Activated B cell treated with CpG ODN at 0.5 μM for 24 hours (primary cell): ENCODE measurements at regions of chr15 and their contacts with region 1.

Region 1: GRCh38 chr15:78195735-78196201 is 38.6 kb downstream of the ACSBG1 start:
- DNase-seq: peak; percentile 59
- ATAC-seq: peak; percentile 90
- H3K4me3 Mint-ChIP-seq: no peak overlapping the region
- H3K27ac Mint-ChIP-seq: no peak overlapping the region
- H3K4me1 Mint-ChIP-seq: no peaks in the 10 kb centered on the region
- H3K27me3 Mint-ChIP-seq: no peaks in the 10 kb centered on the region
- CTCF ChIP-seq: peak; percentile 23

Region 2: GRCh38 chr15:77773906-77774305 is 421.9 kb before region 1 on chr15:
- CTCF ChIA-PET with region 1: no interaction called
- POLR2A ChIA-PET with region 1: no interaction called
- intact Hi-C with region 1: no loop called
- DNase-seq: no peak
- ATAC-seq: no peak
- H3K4me3 Mint-ChIP-seq: no peak overlapping the region
- H3K27ac Mint-ChIP-seq: no peak overlapping the region
- H3K4me1 Mint-ChIP-seq: no peaks in the 10 kb centered on the region
- H3K27me3 Mint-ChIP-seq: peaks cover 8% of the 10 kb centered on the region
- CTCF ChIP-seq: no peak

Region 3: GRCh38 chr15:77959432-77959879 is 236.3 kb before region 1 on chr15:
- CTCF ChIA-PET with region 1: interaction called, 16 read pairs
- POLR2A ChIA-PET with region 1: no interaction called
- intact Hi-C with region 1: loop called (anchors 1 kb)
- DNase-seq: peak; percentile 69
- ATAC-seq: peak; percentile 99
- H3K4me3 Mint-ChIP-seq: peak overlapping the region; percentile 44
- H3K27ac Mint-ChIP-seq: no peak overlapping the region
- H3K4me1 Mint-ChIP-seq: peaks cover 7% of the 10 kb centered on the region
- H3K27me3 Mint-ChIP-seq: peaks cover 23% of the 10 kb centered on the region
- CTCF ChIP-seq: peak; percentile 93

Region 4: DNA sequence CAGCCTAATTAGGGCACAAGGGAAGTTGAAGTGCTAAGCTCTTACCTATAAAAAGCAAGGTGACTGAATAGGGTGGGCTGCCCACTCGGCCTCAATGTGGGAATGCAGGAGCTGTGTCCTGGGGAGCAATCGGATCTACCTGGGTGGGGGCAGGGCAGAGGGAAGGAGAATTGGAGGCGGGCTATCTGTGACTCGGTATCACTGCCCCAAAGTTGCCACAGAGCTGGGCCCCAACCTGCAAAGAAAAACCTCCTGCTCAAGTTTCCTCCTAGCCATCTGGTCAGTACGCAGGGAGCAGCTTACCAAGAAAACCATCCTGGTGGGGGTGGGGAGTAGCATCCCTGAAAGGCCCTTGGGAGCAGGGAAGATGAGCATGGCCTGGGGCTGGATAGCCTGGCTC is 75.2 kb before region 1 on chr15:
- CTCF ChIA-PET with region 1: interaction called, 191 read pairs
- POLR2A ChIA-PET with region 1: no interaction called
- intact Hi-C with region 1: no loop called
- DNase-seq: no peak
- ATAC-seq: no peak
- H3K4me3 Mint-ChIP-seq: no peak overlapping the region
- H3K27ac Mint-ChIP-seq: no peak overlapping the region
- H3K4me1 Mint-ChIP-seq: no peaks in the 10 kb centered on the region
- H3K27me3 Mint-ChIP-seq: no peaks in the 10 kb centered on the region
- CTCF ChIP-seq: no peak

Region 5: DNA sequence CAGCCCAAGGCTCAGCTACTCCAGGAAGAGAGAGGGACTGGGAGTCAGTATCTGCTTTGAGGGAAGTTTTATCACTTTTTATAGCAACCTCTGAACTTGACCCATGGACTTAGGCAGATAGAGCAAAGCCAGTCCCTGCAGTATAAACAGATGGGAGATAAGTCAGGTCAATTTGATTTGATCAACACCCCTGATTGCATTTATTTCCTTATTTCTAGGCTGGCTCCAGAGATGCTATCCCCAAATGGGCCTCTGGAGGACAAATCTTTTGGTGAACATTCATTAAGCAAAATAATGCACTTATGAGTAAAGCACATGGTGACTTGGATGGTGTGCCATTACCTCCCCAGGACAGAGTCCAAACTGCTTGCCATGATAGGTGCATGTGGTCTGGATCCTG is 55.5 kb before region 1 on chr15:
- CTCF ChIA-PET with region 1: interaction called, 202 read pairs
- POLR2A ChIA-PET with region 1: no interaction called
- intact Hi-C with region 1: no loop called
- DNase-seq: no peak
- ATAC-seq: no peak
- H3K4me3 Mint-ChIP-seq: no peak overlapping the region
- H3K27ac Mint-ChIP-seq: no peak overlapping the region
- H3K4me1 Mint-ChIP-seq: no peaks in the 10 kb centered on the region
- H3K27me3 Mint-ChIP-seq: no peaks in the 10 kb centered on the region
- CTCF ChIP-seq: no peak

Region 6: GRCh38 chr15:78155355-78155939 is 40.3 kb before region 1 on chr15:
- CTCF ChIA-PET with region 1: interaction called, 18 read pairs
- POLR2A ChIA-PET with region 1: interaction called, 6 read pairs
- intact Hi-C with region 1: no loop called
- DNase-seq: no peak
- ATAC-seq: no peak
- H3K4me3 Mint-ChIP-seq: no peak overlapping the region
- H3K27ac Mint-ChIP-seq: no peak overlapping the region
- H3K4me1 Mint-ChIP-seq: peaks cover 21% of the 10 kb centered on the region
- H3K27me3 Mint-ChIP-seq: no peaks in the 10 kb centered on the region
- CTCF ChIP-seq: no peak

Region 7: DNA sequence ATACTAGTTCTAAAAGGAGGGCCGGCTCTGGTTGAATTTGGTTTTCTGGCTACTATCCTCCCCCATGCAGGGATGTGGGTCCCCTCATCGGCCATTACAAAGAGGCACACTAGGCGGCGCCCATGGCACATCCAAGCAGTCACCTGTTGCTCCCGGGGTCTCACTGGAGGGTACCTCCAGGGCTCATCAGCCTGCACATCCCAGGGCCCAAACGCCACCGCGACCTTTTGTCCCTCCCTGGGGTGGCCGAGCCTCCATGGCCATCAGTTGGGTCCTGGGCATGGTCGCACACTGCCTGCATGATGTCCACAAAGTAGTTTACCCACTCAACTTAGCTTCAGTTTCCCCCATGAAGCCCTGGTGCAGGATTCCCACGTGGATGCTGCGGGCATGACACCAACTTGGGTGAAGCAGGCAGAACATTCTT is 18.3 kb before region 1 on chr15:
- CTCF ChIA-PET with region 1: interaction called, 37 read pairs
- POLR2A ChIA-PET with region 1: interaction called, 6 read pairs
- intact Hi-C with region 1: no loop called
- DNase-seq: no peak
- ATAC-seq: peak; percentile 40
- H3K4me3 Mint-ChIP-seq: no peak overlapping the region
- H3K27ac Mint-ChIP-seq: no peak overlapping the region
- H3K4me1 Mint-ChIP-seq: peaks cover 38% of the 10 kb centered on the region
- H3K27me3 Mint-ChIP-seq: no peaks in the 10 kb centered on the region
- CTCF ChIP-seq: no peak

Region 8: DNA sequence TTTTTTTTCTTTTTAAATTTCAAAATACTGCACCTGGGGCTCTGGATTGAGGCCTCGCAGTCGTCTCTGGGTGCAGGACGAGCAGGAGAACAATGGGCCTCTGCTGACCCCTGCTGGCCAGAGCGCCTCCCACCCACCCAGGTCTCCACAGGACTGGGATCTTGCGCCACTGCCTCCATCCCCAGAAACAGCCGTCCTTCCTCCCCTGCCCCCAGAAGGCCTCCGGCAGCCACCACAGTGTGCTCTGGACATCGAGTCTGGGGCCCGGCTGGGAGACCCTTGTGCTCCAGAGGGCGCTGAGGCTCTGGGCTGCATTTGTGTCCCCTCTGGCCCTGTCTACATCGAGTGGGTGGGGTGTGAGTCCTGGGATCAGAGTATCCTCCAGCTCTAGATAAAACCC is 45.2 kb after region 1 on chr15:
- CTCF ChIA-PET with region 1: interaction called, 43 read pairs
- POLR2A ChIA-PET with region 1: no interaction called
- intact Hi-C with region 1: loop called (anchors 1 kb)
- DNase-seq: peak; percentile 77
- ATAC-seq: peak; percentile 94
- H3K4me3 Mint-ChIP-seq: no peak overlapping the region
- H3K27ac Mint-ChIP-seq: no peak overlapping the region
- H3K4me1 Mint-ChIP-seq: peaks cover 2% of the 10 kb centered on the region
- H3K27me3 Mint-ChIP-seq: no peaks in the 10 kb centered on the region
- CTCF ChIP-seq: no peak

Region 9: DNA sequence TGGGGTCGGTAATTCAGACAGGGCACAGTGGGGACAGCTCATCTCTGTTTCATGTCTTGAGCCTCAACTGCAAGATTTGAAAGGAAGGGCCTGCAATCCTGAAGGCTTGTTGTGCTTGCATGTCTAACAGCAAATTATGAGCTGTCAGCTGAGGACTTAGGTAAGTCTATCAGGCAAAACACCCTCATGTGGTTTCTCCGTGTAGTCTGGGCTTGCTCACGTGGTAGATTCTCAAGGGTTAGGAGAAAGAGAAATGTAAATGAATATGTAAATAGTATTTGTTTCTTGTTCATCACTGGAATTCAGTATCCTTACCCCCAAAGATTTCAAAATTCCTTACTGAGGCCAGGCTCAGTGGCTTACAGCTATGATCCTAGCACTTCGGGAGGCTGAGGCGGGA is 281.5 kb after region 1 on chr15:
- CTCF ChIA-PET with region 1: no interaction called
- POLR2A ChIA-PET with region 1: no interaction called
- intact Hi-C with region 1: no loop called
- DNase-seq: no peak
- ATAC-seq: no peak
- H3K4me3 Mint-ChIP-seq: no peak overlapping the region
- H3K27ac Mint-ChIP-seq: no peak overlapping the region
- H3K4me1 Mint-ChIP-seq: no peaks in the 10 kb centered on the region
- H3K27me3 Mint-ChIP-seq: no peaks in the 10 kb centered on the region
- CTCF ChIP-seq: no peak

Region 10: GRCh38 chr15:78709263-78709882 is 513.6 kb after region 1 on chr15:
- CTCF ChIA-PET with region 1: no interaction called
- POLR2A ChIA-PET with region 1: no interaction called
- intact Hi-C with region 1: no loop called
- DNase-seq: peak; percentile 62
- ATAC-seq: peak; percentile 99
- H3K4me3 Mint-ChIP-seq: no peak overlapping the region
- H3K27ac Mint-ChIP-seq: no peak overlapping the region
- H3K4me1 Mint-ChIP-seq: peaks cover 6% of the 10 kb centered on the region
- H3K27me3 Mint-ChIP-seq: peaks cover 31% of the 10 kb centered on the region
- CTCF ChIP-seq: no peak